MCF 10A (cell line): ENCODE measurements at regions of chr1 and their contacts with region 1.

Region 1: GRCh38 chr1:210597555-210598134 is 268.9 kb downstream of the HHAT start:
- DNase-seq: peak; percentile 94
- H3K4me3 Mint-ChIP-seq: no peak overlapping the region
- H3K27ac Mint-ChIP-seq: peak overlapping the region; percentile 98
- H3K4me1 Mint-ChIP-seq: peaks cover 19% of the 10 kb centered on the region
- H3K27me3 Mint-ChIP-seq: no peaks in the 10 kb centered on the region
- CTCF ChIP-seq: no peak

Region 2: GRCh38 chr1:210726621-210727020 is 129.0 kb after region 1 on chr1:
- CTCF ChIA-PET with region 1: no interaction called
- POLR2A ChIA-PET with region 1: no interaction called
- intact Hi-C with region 1: loop called (anchors 2 kb)
- DNase-seq: peak; percentile 88
- H3K4me3 Mint-ChIP-seq: no peak overlapping the region
- H3K27ac Mint-ChIP-seq: no peak overlapping the region
- H3K4me1 Mint-ChIP-seq: no peaks in the 10 kb centered on the region
- H3K27me3 Mint-ChIP-seq: peaks cover 15% of the 10 kb centered on the region
- CTCF ChIP-seq: no peak

Region 3: DNA sequence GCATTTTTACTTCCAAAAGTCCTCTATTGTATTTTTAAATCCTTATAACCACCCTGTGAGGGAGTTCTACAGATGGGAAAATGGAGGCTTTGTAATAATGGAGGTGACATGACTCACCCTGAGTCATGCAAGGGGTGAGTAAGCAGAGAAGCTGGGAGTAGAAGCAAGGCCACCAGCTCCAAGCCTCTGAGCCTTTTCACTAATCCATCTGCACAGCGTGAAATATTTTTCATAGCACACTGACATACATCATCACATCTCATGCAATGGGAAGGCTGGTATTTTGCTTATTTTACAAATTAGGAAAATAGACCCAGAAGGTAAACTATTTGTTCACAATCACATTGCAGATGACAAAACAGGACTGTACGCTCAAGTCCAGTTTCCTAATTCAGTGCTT is 439.4 kb after region 1 on chr1:
- CTCF ChIA-PET with region 1: no interaction called
- POLR2A ChIA-PET with region 1: no interaction called
- intact Hi-C with region 1: loop called (anchors 2 kb)
- DNase-seq: peak; percentile 99
- H3K4me3 Mint-ChIP-seq: no peak overlapping the region
- H3K27ac Mint-ChIP-seq: peak overlapping the region; percentile 56
- H3K4me1 Mint-ChIP-seq: peaks cover 19% of the 10 kb centered on the region
- H3K27me3 Mint-ChIP-seq: no peaks in the 10 kb centered on the region
- CTCF ChIP-seq: no peak